Dorsolateral prefrontal cortex (tissue), 120 donors: ENCODE measurements at regions of chr17 and their contacts with region 1.

Region 1: GRCh38 chr17:78378225-78379130 is at the start of gene PGS1:
- DNase-seq: peak; percentile 61 to 89 (median 76)
- H3K4me3 ChIP-seq: peak within 1 kb of the TSS; percentile 67 to 100 (median 97)
- H3K27ac ChIP-seq: peak within 1 kb of the TSS; percentile 43 to 98 (median 90)
- H3K27me3 ChIP-seq: no peaks in the 10 kb centered on the region
- CTCF ChIP-seq: peak in 46 of 56 donors; percentile 10 to 65 (median 38)
- total RNA-seq, gene PGS1: 40.3 to 89.2 (median 57.6) TPM

Region 2: DNA sequence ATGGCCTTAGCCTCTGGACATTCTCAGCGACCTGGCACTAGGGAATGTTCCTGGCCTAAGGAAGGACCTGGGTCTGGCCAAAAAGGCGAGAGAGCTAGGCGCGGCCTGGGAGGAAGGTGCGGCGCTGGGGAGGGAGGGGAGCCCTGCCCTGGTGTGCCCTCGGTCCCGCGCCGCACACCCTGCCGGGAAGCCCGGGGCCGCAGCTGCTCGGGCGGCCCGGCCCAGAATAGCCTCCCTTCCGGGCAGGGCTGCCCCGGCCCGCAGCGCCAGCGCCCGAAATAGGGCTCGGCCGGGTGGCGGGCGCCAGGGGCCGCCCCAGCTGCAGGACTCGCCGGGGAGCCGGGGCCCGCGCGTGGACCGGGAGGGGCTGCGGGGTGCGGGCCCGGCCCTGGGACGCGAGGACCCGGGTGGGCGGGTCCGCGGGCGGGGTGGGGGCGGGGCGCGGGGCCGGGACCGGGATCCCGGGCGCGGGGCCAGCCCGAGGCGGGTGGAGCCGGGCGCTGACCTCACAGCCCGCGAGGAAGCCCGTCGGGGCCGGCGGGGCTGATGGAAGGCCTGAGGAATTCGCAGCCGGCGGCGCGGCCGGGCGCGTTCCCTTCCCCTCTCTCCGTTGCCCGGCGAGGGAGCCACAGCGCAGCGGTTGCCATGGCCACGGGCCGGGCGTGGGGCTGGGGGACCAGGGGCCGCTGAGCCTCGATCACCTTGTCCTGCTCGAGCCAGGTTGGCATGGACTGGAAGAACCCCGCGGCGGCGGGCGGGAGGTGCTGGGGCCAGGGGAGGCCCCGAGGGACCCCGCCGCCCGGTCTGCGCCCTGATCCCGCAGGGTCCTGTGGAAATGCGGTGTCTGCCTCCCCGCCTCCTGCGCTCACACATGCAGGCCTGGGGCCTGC is 36.7 kb before region 1 on chr17:
- intact Hi-C with region 1: loop called in 1 of 2 experiments (anchors 5 kb)
- DNase-seq: peak in 8 of 10 donors; percentile 44 to 85 (median 64)
- H3K4me3 ChIP-seq: peak overlapping the region; percentile 24 to 65 (median 49)
- H3K27ac ChIP-seq: peak overlapping the region in 58 of 59 donors; percentile 48 to 95 (median 86)
- H3K27me3 ChIP-seq: no peaks in the 10 kb centered on the region
- CTCF ChIP-seq: peak in 34 of 56 donors; percentile 9 to 57 (median 36)

Region 3: GRCh38 chr17:78774956-78775571 is 396.6 kb after region 1 on chr17:
- intact Hi-C with region 1: loop called in 1 of 2 experiments (anchors 10 kb)
- DNase-seq: peak in 1 of 10 donors; percentile 32
- H3K4me3 ChIP-seq: peak overlapping the region in 33 of 59 donors; percentile 0 to 44 (median 20)
- H3K27ac ChIP-seq: peak overlapping the region in 41 of 59 donors; percentile 0 to 81 (median 46)
- H3K27me3 ChIP-seq: no peaks in the 10 kb centered on the region
- CTCF ChIP-seq: no peak